ENCODE measurements at regions of chr2 and their contacts with region 1.

Region 1: DNA sequence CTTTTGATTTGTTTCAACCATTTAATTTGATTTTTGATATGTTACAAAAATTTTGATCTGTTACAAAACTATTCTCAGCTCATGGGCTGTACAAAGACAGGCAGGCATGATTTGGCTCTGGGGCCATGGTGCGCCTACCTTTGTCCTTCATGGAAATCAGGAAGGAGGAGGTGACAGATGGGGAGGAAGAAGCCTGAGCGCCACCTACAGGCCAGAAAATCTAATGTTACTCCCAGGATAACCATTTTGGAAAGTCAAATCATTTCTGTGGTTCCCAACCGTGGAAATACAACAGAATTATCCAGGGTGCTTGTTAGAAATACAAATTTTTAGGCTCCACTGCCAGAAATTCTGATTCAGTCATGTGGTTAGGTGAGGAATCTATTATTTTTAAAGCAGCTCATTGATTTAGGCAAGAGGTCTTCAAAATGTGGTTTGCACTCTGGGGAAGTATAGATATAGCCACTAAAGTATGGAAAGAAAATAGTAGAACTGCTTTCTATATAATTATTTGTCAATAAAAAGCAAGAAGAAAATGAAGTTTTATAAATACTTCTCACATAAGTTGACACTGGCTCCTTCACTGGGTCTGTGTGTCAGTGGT is 93.9 kb downstream of the EVA1A start:
- DNase-seq: no peak
- H3K4me3 ChIP-seq: no peak overlapping the region
- H3K27me3 ChIP-seq: peaks cover 8% of the 10 kb centered on the region
- CTCF ChIP-seq: peak; percentile 57

Region 2: DNA sequence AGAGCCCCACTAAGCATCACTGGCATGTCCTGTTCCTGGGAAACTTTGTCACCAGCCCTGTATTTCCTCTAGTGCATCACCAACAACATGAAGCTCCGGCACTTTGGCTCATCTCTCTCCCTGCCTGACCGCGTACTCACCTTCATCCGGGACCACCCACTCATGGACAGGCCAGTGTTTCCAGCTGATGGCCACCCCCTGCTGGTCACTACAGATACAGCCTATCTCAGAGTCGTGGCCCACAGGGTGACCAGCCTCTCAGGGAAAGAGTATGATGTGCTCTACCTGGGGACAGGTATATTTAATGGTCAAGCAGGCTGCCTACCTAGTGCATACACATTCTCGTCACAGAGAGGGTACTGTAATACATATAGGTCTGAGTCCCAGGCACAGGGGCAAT is 791.7 kb before region 1 on chr2:
- CTCF ChIA-PET with region 1: no interaction called
- POLR2A ChIA-PET with region 1: no interaction called
- DNase-seq: no peak
- H3K4me3 ChIP-seq: no peak overlapping the region
- H3K27me3 ChIP-seq: no peaks in the 10 kb centered on the region
- CTCF ChIP-seq: peak; percentile 29; the same call in 1 of the 2 replicates

Region 3: DNA sequence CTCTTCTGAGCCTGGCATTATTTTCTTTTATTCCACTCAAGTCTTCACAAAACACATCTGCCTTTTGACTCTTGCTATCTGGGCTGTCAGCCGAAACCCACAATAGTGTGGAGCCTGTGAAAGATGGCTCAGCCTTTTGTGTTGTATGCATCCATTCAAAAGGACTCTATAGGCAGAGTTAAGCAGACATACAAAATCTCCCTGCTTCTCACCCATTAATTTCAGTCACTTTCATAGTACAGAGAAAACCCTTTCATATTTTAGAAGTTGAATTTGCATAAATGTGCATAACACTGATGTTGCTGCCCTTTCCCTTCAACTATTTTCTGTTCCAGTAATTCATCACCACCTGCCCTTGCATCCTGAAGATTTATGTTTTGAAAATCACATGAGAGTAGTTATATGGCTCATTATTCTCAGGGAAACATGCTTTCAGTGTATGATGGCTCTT is 60.7 kb before region 1 on chr2:
- CTCF ChIA-PET with region 1: no interaction called
- POLR2A ChIA-PET with region 1: no interaction called
- DNase-seq: no peak
- H3K4me3 ChIP-seq: no peak overlapping the region
- H3K27me3 ChIP-seq: peaks cover 4% of the 10 kb centered on the region; the same call in 1 of the 2 replicates
- CTCF ChIP-seq: no peak

Region 4: DNA sequence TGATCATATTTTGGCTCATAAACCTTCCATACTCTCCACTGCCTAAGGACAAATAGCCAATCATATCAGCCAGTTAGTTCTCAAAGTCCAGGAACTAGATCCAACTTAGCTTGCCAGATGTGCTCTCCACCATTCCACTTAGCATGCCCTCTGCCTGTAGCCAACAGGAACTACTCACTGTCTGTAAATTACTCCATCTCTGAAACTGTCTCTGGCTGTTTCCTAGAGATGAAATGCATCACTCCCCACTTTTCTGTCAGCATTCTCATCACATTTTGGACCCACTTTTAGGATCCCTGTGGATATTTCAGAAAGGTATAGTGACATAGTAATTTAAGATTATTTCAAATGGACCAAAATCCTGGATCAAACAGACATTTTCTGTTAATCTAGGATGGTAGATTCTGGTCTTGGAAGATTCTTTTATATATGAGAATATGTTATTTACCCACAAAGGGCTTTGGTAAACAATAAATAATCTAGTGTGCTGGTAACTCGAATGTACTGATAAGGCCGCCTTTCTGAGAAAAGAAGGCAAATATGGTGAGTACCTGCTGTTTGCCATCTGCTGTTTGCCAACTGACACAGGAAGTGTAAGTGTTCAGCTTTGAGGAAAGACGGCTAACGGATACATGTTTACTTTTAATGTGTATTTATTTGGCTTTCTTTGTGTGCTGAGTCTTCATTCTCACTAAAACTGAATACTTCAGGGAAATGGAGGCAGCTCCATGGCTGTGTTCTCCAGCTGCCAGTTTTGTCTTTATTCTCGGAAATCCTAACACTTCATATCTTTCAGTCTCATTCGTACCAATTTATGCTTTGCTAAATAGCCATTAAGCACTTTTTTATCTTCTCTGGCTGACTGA is 14.4 kb after region 1 on chr2:
- CTCF ChIA-PET with region 1: interaction called, 79 read pairs
- POLR2A ChIA-PET with region 1: no interaction called
- DNase-seq: no peak
- H3K4me3 ChIP-seq: no peak overlapping the region
- H3K27me3 ChIP-seq: no peaks in the 10 kb centered on the region
- CTCF ChIP-seq: peak; percentile 56

Region 5: DNA sequence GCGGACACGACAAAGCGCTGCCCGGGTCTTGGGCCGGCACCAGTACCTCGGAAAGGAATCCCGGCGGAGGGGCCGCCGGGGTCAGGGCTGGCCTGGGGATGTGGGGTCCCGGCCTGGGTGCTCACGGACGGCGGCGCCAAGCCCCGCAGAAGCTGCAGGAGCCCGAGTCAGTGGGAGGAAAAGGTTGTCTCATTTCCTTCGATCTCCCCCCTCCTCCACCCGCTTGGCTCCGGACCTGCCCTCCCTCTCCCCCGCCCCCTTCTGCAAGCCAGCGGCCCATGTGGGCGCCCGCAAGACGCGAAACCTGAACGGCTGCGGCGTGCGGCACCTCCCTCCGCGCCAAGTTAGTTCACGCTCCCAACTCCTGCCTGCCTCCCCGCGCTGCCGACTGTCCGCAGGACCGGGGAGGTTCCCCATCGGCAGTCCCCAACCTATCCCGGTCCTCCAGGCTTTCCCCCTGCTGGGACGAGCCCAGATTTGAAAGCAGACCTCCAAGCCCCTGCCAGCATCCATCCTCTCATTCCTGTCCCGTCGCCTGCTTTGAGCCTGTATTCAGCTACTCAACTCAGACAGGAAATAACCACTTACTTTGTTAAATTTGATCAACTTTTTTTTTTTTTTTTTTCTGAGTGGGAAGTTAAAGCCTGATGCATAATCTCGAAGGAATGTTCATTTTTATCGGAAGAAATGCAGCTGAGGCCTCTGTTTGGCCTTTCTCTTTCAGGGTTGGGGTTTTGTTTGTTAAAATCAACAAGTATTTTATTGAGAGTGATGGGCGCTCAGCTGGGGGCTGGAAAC is 94.2 kb after region 1 on chr2 and contains the start of gene EVA1A:
- CTCF ChIA-PET with region 1: interaction called, 40 read pairs
- POLR2A ChIA-PET with region 1: no interaction called
- DNase-seq: peak; percentile 39
- H3K4me3 ChIP-seq: peak within 1 kb of the TSS; percentile 78
- H3K27me3 ChIP-seq: no peaks in the 10 kb centered on the region
- CTCF ChIP-seq: no peak
- polyA plus RNA-seq, gene EVA1A: 30.2 and 41.0 TPM in 2 replicates

Region 6: GRCh38 chr2:75602724-75603342 is 136.0 kb after region 1 on chr2:
- CTCF ChIA-PET with region 1: interaction called, 215 read pairs
- POLR2A ChIA-PET with region 1: interaction called, 3 read pairs
- DNase-seq: peak; percentile 84
- H3K4me3 ChIP-seq: no peak overlapping the region
- H3K27me3 ChIP-seq: no peaks in the 10 kb centered on the region
- CTCF ChIP-seq: no peak

Region 7: DNA sequence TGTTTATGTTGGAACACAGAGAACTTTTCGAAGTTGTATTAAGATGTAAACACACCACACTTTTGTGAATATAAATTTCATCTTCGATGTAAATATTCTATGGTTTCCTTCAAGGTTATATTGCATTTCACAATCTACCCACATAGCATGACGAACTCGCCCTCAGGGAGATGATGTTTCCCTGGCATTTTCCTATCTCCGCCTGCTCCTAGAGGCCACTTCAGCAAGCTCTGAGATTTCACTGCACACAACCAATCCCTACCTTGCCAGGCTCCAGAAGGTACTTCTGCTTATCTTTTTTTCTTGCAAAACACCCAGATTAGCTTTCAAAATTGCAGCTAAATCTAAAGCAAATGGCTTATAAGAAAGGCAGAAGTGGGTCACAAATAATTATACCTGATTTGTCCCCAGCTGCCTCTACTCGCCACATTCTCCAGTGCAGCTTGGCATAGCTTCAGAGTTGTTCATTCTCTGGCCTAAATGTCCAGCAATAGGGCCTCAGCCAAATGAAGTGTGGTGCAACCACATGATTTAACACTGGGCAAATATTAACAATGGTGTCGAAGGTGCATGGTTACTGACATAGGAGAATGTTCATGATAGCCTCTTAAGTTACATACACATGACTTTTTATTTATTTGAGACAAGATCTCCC is 147.4 kb after region 1 on chr2:
- CTCF ChIA-PET with region 1: interaction called, 215 read pairs
- POLR2A ChIA-PET with region 1: no interaction called
- DNase-seq: no peak
- H3K4me3 ChIP-seq: no peak overlapping the region
- H3K27me3 ChIP-seq: peaks cover 1% of the 10 kb centered on the region
- CTCF ChIP-seq: no peak

Region 8: DNA sequence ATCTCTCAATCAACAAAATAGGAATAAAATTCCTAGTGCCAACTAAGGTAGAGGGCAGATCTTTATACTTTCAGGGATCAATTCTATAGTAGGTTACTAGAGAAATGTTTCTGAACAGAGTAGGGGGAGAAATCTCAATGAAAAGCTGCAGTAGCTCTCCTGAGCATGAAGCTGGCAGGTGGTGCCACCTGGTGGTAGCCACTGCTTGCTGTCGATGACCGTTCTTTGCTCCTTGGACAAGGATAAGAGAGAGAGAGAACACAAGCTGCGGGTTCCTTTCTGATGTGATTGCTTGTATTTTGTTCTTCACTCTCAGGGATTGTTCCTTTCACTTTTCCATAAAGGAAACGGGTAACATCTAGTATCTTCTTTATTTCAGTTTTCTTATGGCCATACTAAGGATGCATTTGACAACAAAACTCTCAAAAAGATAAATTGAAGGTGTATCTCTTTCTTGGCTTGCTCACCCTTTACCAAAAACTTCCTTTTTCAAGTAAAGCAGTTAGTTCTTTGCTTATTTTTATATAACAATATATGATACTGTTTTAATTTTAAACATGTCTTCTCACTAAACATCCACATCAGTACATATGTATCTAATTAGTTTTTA is 161.2 kb after region 1 on chr2:
- CTCF ChIA-PET with region 1: interaction called, 113 read pairs
- POLR2A ChIA-PET with region 1: no interaction called
- DNase-seq: no peak
- H3K4me3 ChIP-seq: no peak overlapping the region
- H3K27me3 ChIP-seq: peaks cover 8% of the 10 kb centered on the region
- CTCF ChIP-seq: peak; percentile 98

Region 9: GRCh38 chr2:75640621-75641121 is 173.9 kb after region 1 on chr2:
- CTCF ChIA-PET with region 1: interaction called, 15 read pairs
- POLR2A ChIA-PET with region 1: no interaction called
- DNase-seq: peak; percentile 24
- H3K4me3 ChIP-seq: no peak overlapping the region
- H3K27me3 ChIP-seq: peaks cover 8% of the 10 kb centered on the region
- CTCF ChIP-seq: peak; percentile 100

Measured in BJ (cell line).